ENCODE measurements at regions of chr1 and their contacts with region 1.

Region 1: GRCh38 chr1:163535807-163536206 is 214.1 kb downstream of the NUF2 start:
- DNase-seq: peak; percentile 72
- ATAC-seq: peak; percentile 76
- H3K4me3 ChIP-seq: no peak overlapping the region
- H3K27ac ChIP-seq: no peak overlapping the region
- H3K4me1 ChIP-seq: no peaks in the 10 kb centered on the region
- H3K27me3 ChIP-seq: peaks cover 49% of the 10 kb centered on the region
- CTCF ChIP-seq: peak; percentile 84

Region 2: DNA sequence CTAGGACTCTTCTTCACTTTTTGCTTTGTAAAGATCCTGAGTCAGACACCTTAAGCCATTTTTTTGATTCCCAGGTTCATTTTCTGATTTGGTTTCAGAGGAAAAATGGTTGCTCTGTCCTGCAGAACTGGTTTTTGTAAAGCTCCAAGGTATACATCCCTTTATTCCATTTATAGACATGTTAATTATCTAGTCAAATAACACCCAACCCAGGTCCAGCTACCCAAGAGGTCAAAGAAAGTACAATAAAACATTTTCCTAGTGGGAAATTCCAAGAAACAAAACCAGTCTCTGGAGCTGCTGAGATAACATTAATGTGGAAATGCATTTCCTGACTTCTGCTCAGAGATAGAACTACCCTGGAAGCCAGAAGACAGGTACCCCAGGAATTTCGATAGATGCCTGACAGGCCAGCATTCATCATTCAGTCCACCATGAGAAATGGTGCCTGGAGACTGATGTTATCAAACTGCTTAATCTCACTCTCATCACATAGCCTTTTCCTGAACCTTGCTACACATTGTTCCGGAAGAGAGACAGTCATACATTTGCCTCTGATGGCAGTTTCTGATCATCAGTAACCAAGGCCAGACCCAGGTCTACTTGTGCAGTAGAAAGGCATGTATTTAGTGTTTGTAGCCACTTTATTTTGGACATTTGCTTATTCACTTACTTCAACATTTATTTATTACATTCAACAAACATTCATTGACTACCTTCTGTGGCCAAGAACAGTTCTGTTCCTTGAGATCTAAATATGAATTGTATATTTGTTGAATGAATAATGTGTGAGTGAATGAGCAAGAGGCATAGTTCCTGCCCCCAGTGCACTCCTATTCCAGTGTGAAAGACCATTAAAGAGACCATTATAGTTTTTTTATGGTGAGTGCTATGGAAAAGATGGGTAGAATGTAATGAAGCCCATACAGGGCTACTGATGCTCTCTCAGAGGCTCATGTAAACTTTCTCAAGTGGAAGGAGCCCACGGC is 271.5 kb after region 1 on chr1:
- CTCF ChIA-PET with region 1: no interaction called
- POLR2A ChIA-PET with region 1: no interaction called
- intact Hi-C with region 1: loop called (anchors 10 kb)
- DNase-seq: no peak
- ATAC-seq: no peak
- H3K4me3 ChIP-seq: no peak overlapping the region
- H3K27ac ChIP-seq: no peak overlapping the region
- H3K4me1 ChIP-seq: no peaks in the 10 kb centered on the region
- H3K27me3 ChIP-seq: no peaks in the 10 kb centered on the region
- CTCF ChIP-seq: no peak

Region 3: DNA sequence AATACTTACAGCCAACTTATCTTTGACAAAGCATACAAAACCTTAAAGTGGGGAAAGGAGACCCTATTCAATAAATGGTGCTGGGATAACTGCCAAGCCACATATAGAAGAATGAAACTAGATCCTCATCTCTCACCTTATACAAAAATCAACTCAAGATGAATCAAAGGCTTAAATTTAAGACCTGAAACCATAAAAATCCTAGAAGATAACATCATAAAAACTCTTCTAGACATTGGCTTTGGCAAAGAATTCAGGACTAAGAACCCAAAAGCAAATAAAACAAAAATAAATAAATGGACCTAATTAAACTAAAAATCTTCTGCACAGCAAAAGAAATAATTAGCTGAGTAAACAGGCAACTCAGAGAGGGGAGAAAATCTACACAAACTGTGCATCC is 687.6 kb after region 1 on chr1:
- CTCF ChIA-PET with region 1: no interaction called
- POLR2A ChIA-PET with region 1: no interaction called
- intact Hi-C with region 1: no loop called
- DNase-seq: no peak
- ATAC-seq: no peak
- H3K4me3 ChIP-seq: no peak overlapping the region
- H3K27ac ChIP-seq: no peak overlapping the region
- H3K4me1 ChIP-seq: no peaks in the 10 kb centered on the region
- H3K27me3 ChIP-seq: peaks cover 16% of the 10 kb centered on the region
- CTCF ChIP-seq: no peak

Region 4: DNA sequence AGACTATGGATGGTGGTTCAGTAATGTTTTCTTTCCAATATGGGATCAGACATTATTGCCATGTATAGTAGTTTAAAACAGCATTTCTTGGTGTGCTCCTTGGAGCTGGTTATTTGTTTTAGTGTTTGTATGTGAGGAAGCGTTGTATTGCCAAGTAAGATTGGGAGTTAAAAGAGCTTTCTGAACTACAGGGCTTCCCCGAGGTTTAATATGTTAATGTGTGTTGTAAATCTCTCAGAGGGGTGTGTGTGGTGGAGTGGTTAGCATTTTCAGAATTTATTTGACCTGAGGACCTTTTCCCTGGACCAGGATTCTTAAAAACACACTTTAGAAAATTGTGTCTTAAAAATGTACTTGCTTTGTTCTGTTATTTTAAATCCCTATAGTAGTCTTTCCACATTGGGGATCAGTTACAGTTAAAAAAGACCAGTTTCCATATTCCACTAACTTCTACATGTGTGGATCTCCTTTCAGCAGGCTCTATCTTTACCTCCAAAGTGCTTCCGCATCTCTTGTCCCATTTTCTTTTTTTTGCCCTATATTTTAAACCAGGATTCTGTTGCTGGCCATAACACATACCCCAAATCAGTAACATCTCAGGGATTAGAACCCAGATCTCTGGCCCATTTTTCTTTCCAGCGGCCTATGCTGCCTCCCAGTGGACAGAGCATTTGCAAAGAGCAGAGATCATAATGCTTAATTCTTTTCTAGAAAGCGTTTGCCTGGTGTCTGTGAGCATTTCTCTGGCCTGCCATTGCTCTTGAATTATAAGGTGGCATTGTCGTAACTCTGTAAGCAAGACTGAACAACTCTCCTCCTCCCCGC is 1081.8 kb after region 1 on chr1:
- CTCF ChIA-PET with region 1: no interaction called
- POLR2A ChIA-PET with region 1: no interaction called
- intact Hi-C with region 1: loop called (anchors 10 kb)
- DNase-seq: peak; percentile 70
- ATAC-seq: peak; percentile 31
- H3K4me3 ChIP-seq: no peak overlapping the region
- H3K27ac ChIP-seq: no peak overlapping the region
- H3K4me1 ChIP-seq: peaks cover 12% of the 10 kb centered on the region
- H3K27me3 ChIP-seq: no peaks in the 10 kb centered on the region
- CTCF ChIP-seq: peak; percentile 94